GM10248 (cell line): ENCODE measurements at regions of chr15 and their contacts with region 1.

Region 1: GRCh38 chr15:84992157-84992944 is 10.7 kb downstream of the PDE8A start:
- DNase-seq: no peak
- CTCF ChIP-seq: no peak

Region 2: DNA sequence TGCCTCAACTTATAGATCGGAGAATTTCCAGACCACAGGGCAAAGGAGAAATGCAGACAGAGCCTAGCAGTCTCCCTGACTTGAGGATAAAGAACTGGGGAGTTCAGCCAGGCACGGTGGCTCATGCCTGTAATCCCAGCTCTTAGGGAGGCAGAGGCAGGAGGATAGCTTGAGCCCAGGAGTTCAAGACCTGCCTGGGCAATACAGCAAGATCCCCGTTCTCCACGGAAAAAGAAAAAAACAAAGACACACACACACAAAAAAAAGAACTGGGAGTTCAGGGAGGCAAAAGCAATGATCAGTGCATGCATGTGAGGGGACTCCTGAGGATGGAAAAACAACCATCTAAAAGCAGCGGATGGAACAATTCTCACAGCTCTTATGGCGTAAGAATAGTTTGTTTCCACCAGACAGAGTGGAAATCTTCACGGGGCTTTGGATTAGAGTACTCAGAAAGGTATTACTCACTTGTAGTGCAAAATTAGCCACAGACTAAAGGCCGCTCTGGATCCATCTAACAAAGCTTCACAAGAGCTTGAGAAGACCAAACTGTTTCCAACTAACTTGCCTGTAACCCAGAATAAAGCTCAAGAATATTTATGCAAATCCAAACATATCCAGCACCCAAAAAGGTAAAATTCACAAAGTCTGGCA is 292.7 kb before region 1 on chr15:
- CTCF ChIA-PET with region 1: no interaction called
- POLR2A ChIA-PET with region 1: no interaction called
- DNase-seq: no peak
- CTCF ChIP-seq: no peak

Region 3: GRCh38 chr15:85002517-85002916 is 10.2 kb after region 1 on chr15:
- CTCF ChIA-PET with region 1: interaction called, 11 read pairs
- POLR2A ChIA-PET with region 1: interaction called, 5 read pairs
- DNase-seq: no peak
- CTCF ChIP-seq: no peak

Region 4: DNA sequence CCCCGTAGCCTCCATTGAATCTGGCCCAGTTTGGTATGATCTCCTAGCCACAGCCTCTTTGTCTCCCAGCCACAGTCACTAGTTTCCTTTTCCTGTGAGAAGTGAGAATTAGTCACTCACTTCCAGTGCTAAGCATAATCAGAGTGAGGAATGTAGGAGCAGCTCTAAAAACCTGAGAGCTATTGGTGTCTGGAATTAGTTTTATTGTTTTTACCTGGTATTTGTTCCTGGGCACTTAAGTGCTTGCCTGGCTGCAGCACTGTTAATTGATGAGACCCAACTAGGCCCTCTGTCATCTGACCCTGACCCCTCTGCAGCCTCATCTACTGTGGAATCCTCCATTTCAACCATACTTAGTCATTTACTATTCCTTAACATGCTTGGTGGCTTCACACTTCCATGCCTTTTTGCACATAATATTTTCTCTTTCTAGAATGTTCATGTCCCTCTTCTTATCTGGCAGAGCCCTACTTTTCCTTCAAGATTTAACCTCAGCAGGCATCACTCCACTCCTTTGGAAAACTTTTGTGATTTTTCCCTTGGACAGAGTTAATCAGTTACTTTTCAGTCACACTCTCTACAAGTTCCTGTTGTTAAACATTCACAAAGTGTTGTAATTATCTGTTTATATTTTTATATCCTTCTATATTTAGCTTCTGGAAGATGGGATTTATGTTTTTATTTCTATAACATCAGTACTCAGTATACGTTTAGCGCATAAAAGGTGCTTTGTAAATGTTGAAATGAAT is 38.1 kb after region 1 on chr15:
- CTCF ChIA-PET with region 1: interaction called, 15 read pairs
- POLR2A ChIA-PET with region 1: no interaction called
- DNase-seq: no peak
- CTCF ChIP-seq: no peak